CD4-positive, alpha-beta memory T cell (primary cell): ENCODE measurements at regions of chr20 and their contacts with region 1.

Region 1: GRCh38 chr20:31560094-31560899 is 44.8 kb upstream of the ID1 start:
- DNase-seq: peak; percentile 66 to 74 (median 71)
- H3K4me3 ChIP-seq: no peak overlapping the region
- H3K4me3 Mint-ChIP-seq: no peak overlapping the region
- H3K27ac ChIP-seq: no peak overlapping the region
- H3K27ac Mint-ChIP-seq: peak overlapping the region in 6 of 7 donors; percentile 10 to 62 (median 46)
- H3K4me1 ChIP-seq: peaks cover 9% of the 10 kb centered on the region
- H3K4me1 Mint-ChIP-seq: peaks cover 4 to 13% (median 9%) of the 10 kb centered on the region in 4 donors
- H3K27me3 ChIP-seq: no peaks in the 10 kb centered on the region
- H3K27me3 Mint-ChIP-seq: no peaks in the 10 kb centered on the region

Region 2: GRCh38 chr20:31547017-31547675 is 13.2 kb before region 1 on chr20:
- CTCF ChIA-PET with region 1: interaction called, 67 read pairs
- POLR2A ChIA-PET with region 1: no interaction called
- intact Hi-C with region 1: no loop called
- DNase-seq: peak; percentile 80 to 88 (median 82)
- H3K4me3 ChIP-seq: peak overlapping the region; percentile 45 to 62
- H3K4me3 Mint-ChIP-seq: peak overlapping the region; percentile 89 to 96 (median 94)
- H3K27ac ChIP-seq: peak overlapping the region; percentile 87
- H3K27ac Mint-ChIP-seq: peak overlapping the region; percentile 97 to 100 (median 99)
- H3K4me1 ChIP-seq: peaks cover 21% of the 10 kb centered on the region
- H3K4me1 Mint-ChIP-seq: peaks cover 12 to 32% (median 21%) of the 10 kb centered on the region in 4 donors
- H3K27me3 ChIP-seq: no peaks in the 10 kb centered on the region
- H3K27me3 Mint-ChIP-seq: no peaks in the 10 kb centered on the region

Region 3: DNA sequence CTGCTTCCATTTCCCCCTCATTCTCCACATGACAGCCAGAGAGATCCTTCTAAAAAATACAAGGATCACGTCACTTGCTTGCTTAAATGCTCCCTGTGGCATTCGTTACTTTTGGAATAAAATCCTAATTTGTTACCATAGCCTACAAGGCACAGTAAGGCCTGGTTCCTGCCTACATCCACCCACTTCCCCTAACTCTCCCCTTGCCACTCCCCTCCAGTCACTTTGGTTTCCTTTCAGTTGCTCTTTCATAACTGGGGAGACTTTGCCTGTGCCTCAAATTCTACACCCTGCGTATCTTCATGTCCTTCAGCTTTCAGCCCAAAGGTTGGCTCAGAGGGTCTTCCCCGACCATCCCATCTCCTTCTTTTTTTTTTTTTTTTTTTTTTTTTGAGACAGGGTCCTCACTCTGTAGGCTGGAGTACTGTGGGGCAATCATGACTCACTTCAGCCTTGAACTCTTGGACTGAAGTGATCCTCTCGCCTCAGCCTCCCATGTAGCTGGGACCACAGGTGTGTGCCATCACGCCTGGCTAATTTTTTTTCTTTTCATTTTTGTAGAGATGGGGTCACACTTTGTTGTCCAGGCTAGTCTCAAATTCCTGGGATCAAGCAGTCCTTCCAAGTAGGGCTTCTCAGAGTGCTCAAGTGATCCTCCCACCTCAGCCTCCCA is 57.3 kb after region 1 on chr20:
- CTCF ChIA-PET with region 1: interaction called, 1,094 read pairs
- POLR2A ChIA-PET with region 1: interaction called, 32 read pairs
- intact Hi-C with region 1: loop called (anchors 1 kb)
- DNase-seq: no peak
- H3K4me3 ChIP-seq: no peak overlapping the region
- H3K4me3 Mint-ChIP-seq: no peak overlapping the region
- H3K27ac ChIP-seq: no peak overlapping the region
- H3K27ac Mint-ChIP-seq: no peak overlapping the region
- H3K4me1 ChIP-seq: peaks cover 2% of the 10 kb centered on the region
- H3K4me1 Mint-ChIP-seq: peaks cover 0 to 4% (median 3%) of the 10 kb centered on the region in 4 donors
- H3K27me3 ChIP-seq: no peaks in the 10 kb centered on the region
- H3K27me3 Mint-ChIP-seq: peaks cover 5 to 7% of the 10 kb centered on the region in 2 donors